Thyroid gland (tissue), 4 donors: ENCODE measurements at regions of chr2 and their contacts with region 1.

Region 1: DNA sequence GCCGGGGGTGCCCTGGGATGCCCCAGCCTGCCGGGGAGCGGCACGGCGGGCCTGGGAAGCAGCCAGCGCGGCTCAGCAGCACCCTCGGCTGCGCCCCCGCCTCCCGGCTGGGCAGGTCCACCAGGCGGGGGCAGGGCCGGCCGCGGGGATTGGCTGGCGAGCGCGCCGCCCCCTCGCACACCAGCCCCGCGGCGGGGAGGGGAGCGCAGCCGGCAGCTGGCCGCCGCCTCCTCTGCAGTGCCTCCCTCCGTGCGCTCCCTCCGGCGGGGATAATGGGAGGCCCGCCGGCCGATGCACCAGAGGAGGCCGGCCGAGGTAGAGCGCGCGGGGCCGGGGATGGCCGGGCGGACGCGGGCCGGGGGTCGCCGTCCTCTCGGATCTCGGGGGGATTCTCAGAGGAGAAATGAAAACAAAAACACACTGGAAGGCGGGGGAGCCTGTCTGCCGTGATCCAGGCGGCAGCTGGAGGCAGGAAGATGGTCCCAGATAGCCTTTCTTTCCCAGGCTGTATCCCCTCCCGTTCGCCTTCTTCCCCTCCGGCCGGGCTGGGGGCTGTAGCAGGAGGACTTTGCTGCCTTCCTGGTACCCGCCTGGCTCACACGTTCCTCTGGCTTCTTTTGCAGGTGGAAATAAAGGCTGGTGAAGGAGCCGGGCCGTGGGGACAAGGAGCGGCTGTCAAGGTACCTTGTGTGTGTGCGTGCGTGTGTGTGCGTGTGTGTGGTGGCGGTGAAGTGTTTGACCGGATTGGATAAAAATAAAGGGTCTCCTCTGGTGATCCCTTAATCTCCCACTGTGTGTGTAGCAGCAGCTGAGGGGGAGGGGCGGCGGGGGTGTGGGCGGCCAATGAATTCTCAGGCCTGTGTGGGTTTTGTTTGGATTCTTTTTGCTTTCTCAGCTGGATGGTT is 18.0 kb downstream of the TET3 start:
- DNase-seq: peak; percentile 85 to 87
- H3K4me3 ChIP-seq: peak overlapping the region; percentile 3 to 43 (median 37)
- H3K27ac ChIP-seq: no peak overlapping the region
- H3K4me1 ChIP-seq: peaks cover 25 to 35% of the 10 kb centered on the region in 2 donors
- H3K27me3 ChIP-seq: no peaks in the 10 kb centered on the region
- CTCF ChIP-seq: peak in 2 of 6 experiments; percentile 15 to 21
- POLR2A ChIP-seq: peak in 1 of 2 donors; percentile 76

Region 2: GRCh38 chr2:73736855-73737779 is 265.6 kb before region 1 on chr2 and contains the start of gene TPRKB:
- intact Hi-C with region 1: no loop called
- DNase-seq: peak; percentile 96
- H3K4me3 ChIP-seq: peak within 1 kb of the TSS; percentile 54 to 92 (median 70)
- H3K27ac ChIP-seq: peak within 1 kb of the TSS in 2 of 3 donors; percentile 19 to 41
- H3K4me1 ChIP-seq: peaks cover 8 to 14% of the 10 kb centered on the region in 2 donors
- H3K27me3 ChIP-seq: no peaks in the 10 kb centered on the region
- CTCF ChIP-seq: no peak
- POLR2A ChIP-seq: peak; percentile 28 to 52
- total RNA-seq, gene TPRKB: 16.2 to 25.7 (median 19.7) TPM

Region 3: GRCh38 chr2:73896362-73897239 is 106.1 kb before region 1 on chr2:
- intact Hi-C with region 1: no loop called
- DNase-seq: no peak
- H3K4me3 ChIP-seq: no peak overlapping the region
- H3K27ac ChIP-seq: no peak overlapping the region
- H3K4me1 ChIP-seq: no peaks in the 10 kb centered on the region
- H3K27me3 ChIP-seq: no peaks in the 10 kb centered on the region
- CTCF ChIP-seq: no peak
- POLR2A ChIP-seq: no peak

Region 4: DNA sequence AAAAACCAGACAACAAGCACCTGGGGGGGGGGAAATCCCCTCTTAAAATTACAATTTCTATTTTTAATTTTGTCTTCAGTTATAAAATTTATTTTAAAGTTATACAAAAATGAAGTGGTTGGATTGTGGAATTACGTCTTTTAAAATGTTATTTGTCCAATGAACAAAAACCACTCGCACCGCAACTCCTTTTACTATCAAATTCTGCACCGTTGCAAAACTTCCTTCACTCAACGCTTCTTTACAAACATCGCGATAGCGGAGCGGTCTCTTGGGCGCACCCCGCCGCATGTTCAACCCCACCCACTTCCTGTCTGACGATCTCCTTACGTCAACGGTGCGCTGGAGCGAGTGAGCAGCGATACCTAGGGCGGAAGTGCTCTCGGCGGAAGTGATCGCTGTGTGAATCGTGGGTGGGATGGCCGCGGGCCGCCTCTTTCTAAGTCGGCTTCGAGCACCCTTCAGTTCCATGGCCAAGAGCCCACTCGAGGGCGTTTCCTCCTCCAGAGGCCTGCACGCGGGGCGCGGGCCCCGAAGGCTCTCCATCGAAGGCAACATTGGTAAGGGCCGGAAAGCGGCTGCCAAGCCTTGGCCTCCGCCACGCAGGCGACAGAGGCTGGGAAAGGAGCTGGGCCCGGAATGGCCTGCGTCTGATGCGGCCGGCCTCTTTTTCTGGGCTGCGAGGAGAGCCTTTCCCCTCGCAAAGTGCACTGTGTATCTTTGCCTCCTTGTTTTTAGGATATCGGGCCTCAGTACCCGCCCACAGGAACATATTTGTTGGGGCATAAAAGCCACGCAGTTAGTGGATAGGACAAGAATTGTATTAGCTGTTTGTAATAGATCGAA is 76.0 kb before region 1 on chr2 and contains the start of gene DGUOK:
- intact Hi-C with region 1: loop called (anchors 10 kb)
- DNase-seq: peak; percentile 99
- H3K4me3 ChIP-seq: peak within 1 kb of the TSS; percentile 16 to 74 (median 70)
- H3K27ac ChIP-seq: peak within 1 kb of the TSS; percentile 91 to 96 (median 95)
- H3K4me1 ChIP-seq: peaks cover 14 to 20% of the 10 kb centered on the region in 2 donors
- H3K27me3 ChIP-seq: no peaks in the 10 kb centered on the region
- CTCF ChIP-seq: peak in 1 of 6 experiments; percentile 3
- POLR2A ChIP-seq: peak in 1 of 2 donors; percentile 91
- total RNA-seq, gene DGUOK: 41.8 to 65.8 (median 46.9) TPM